ENCODE measurements at regions of chr14 and their contacts with region 1.

Region 1: DNA sequence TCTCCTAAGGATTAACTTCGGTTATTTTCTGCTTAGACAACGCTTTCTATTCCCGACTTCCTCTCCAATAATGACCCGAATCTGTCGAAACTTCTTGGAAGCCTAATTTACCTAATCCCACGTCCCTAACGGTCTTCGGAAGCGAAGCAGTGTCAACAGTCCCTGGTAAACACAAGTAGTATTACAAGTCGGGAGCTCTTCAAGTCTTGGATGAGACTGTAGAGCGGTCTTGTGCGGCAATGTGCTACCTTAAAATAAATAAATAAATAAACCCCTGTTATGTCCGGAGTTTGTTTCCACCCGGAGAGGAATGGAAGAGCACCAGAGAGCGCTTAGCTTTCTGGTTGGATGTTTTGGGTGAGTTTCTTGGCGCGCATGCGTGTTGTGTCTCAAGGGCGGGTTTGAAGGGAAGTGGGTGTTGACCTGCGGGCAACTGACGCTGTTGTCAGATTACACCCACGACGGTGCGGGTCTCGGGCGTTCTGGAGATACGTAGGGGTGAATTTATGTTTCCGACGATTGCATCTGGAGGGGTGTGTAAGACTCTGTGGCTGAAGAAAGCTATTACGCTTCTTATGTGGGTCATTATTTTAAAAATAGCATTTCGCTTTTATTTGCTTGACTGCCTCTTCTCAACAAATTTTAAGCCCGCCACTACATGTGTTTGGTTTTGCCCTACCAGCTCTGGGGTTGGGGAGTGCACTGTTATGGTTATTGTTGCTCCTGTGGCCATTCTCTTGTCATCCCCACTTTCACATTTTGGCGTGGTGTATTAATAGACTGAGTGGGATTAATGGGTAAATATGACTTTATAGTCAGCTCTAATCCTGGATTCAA is at the starts of genes KIAA0586 and TIMM9:
- DNase-seq: peak; percentile 86 to 98 (median 94)

Region 2: GRCh38 chr14:58297762-58298476 is 129.6 kb before region 1 on chr14:
- intact Hi-C with region 1: loop called (anchors 5 kb)
- DNase-seq: peak; percentile 96 to 100 (median 99)

Region 3: DNA sequence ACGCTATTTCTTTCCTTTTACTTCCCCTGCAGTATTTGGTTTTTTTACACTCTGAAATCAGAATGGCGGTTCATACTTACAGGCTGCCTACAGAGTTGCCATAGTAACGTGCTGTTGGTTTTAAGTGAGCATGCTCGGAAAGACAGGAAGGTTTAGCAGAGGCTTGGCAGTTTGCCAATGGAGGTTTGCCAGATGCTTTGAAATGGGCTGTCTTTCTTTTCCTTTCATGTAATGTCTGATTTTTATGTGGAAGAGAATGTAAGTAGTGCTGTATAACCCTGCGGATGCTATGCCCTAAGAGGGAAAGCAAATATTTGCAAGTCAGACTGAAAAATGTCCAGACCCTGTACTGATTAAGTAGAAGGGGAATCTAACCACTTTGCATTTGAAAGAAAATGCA is 96.4 kb before region 1 on chr14:
- intact Hi-C with region 1: loop called (anchors 2 kb)
- DNase-seq: peak; percentile 33 to 95 (median 84)

Region 4: GRCh38 chr14:58815161-58815701 is 387.7 kb after region 1 on chr14:
- intact Hi-C with region 1: no loop called
- DNase-seq: peak in 3 of 42 donors; percentile 12 to 37 (median 18)

Measured in head of caudate nucleus (tissue), 42 donors.